Vagina (tissue), 2 donors: ENCODE measurements at regions of chr12 and their contacts with region 1.

Region 1: GRCh38 chr12:84492351-84492883 is 420.2 kb downstream of the SLC6A15 start:
- DNase-seq: no peak
- H3K4me3 ChIP-seq: no peak overlapping the region
- H3K27ac ChIP-seq: no peak overlapping the region
- H3K4me1 ChIP-seq: no peaks in the 10 kb centered on the region
- H3K27me3 ChIP-seq: no peaks in the 10 kb centered on the region
- CTCF ChIP-seq: no peak
- POLR2A ChIP-seq: no peak

Region 2: GRCh38 chr12:84136862-84137367 is 355.5 kb before region 1 on chr12:
- intact Hi-C with region 1: loop called (anchors 5 kb)
- DNase-seq: no peak
- H3K4me3 ChIP-seq: no peak overlapping the region
- H3K27ac ChIP-seq: no peak overlapping the region
- H3K4me1 ChIP-seq: no peaks in the 10 kb centered on the region
- H3K27me3 ChIP-seq: no peaks in the 10 kb centered on the region
- CTCF ChIP-seq: no peak
- POLR2A ChIP-seq: no peak